GM12878 (cell line): ENCODE measurements at regions of chr12 and their contacts with region 1.

Region 1: DNA sequence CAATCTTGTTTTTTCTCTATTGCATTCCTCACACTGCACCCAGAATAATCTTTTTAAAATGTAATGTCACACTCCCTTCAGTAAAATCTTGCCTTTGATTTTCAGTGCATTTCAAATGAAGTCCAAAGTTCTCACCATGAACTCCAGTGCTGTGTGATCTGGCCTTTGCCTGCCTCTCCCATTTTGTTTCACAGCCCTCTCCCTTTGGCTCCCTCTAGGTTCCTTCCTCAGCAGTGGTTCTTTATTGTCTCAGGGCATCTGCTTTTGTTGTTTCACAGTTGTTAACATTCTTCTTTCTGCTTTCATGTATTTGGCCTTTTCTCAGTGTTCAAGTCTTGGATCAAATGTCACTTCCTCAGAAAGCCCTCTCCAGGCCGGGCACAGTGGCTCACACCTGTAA is 84.5 kb upstream of the AMN1 start:
- DNase-seq: no peak
- ATAC-seq: no peak
- H3K4me3 ChIP-seq: no peak overlapping the region
- H3K27ac ChIP-seq: no peak overlapping the region
- H3K4me1 ChIP-seq: peaks cover 22% of the 10 kb centered on the region
- H3K27me3 ChIP-seq: no peaks in the 10 kb centered on the region
- CTCF ChIP-seq: peak in 2 of 3 experiments; percentile 15 to 18; a peak in 1 of 6 replicates
- EP300 ChIP-seq: no peak
- POLR2A ChIP-seq: no peak
- RAD21 ChIP-seq: peak; percentile 37; the same call in 1 of the 2 replicates

Region 2: DNA sequence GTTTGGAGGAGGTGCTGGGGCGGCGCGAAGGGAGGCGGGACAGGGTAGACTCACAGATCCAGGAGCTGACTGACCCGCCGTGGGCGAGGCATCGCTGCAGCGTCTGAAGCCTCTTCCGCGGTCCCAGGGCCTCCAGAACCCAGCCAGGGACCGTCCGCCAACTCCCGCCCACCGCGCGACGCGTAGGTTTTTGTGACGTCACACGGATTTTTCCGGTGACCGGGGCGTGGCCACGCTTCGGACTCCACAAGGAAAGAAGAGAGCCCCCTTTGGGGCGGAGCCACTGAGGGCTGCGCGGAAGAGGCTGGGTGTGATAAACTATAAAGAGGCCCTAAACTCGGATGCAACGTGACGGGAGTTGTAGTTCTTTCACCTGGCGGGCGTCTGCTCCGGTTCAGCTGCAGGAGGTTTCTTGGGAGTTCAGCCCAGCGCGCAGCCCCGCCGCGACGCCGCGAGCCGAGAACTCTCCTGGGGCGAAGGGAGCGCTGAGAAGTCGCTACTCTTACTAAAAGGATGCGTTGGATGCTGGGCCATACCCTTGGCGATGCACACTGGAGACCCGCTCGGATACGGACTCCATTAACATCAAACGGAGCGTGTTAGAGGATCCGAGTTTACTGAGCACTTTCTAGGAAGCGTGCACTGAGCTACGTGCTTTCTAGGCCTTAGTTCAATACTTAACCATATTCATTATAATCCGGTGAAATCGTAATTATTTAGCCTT is 84.2 kb before region 1 on chr12 and contains the start of gene AMN1:
- CTCF ChIA-PET with region 1: interaction called, 5 read pairs
- POLR2A ChIA-PET with region 1: interaction called, 11 read pairs
- RAD21 ChIA-PET with region 1: interaction called, 18 read pairs
- SMC1A ChIA-PET with region 1: interaction called, 83 read pairs
- in situ Hi-C with region 1: no loop called
- intact Hi-C with region 1: loop called (anchors 5 kb)
- DNase-seq: peak; percentile 99
- ATAC-seq: peak; percentile 96
- H3K4me3 ChIP-seq: peak within 1 kb of the TSS; percentile 79
- H3K27ac ChIP-seq: peak within 1 kb of the TSS; percentile 97
- H3K4me1 ChIP-seq: peaks cover 17% of the 10 kb centered on the region
- H3K27me3 ChIP-seq: no peaks in the 10 kb centered on the region
- CTCF ChIP-seq: no peak
- EP300 ChIP-seq: peak in 1 of 2 experiments; percentile 46; a peak in 1 of 4 replicates
- POLR2A ChIP-seq: peak; percentile 92
- RAD21 ChIP-seq: no peak
- polyA plus RNA-seq, gene AMN1: 15.2 to 19.3 TPM

Region 3: GRCh38 chr12:31859232-31859977 is 46.1 kb after region 1 on chr12:
- CTCF ChIA-PET with region 1: no interaction called
- POLR2A ChIA-PET with region 1: no interaction called
- RAD21 ChIA-PET with region 1: interaction called, 3 read pairs
- SMC1A ChIA-PET with region 1: no interaction called
- in situ Hi-C with region 1: no loop called
- intact Hi-C with region 1: loop called (anchors 2 kb)
- DNase-seq: peak; percentile 63
- ATAC-seq: peak; percentile 90
- H3K4me3 ChIP-seq: no peak overlapping the region; the same call in 1 of the 2 replicates
- H3K27ac ChIP-seq: peak overlapping the region; percentile 74
- H3K4me1 ChIP-seq: peaks cover 6% of the 10 kb centered on the region; the same call in 1 of the 2 replicates
- H3K27me3 ChIP-seq: no peaks in the 10 kb centered on the region
- CTCF ChIP-seq: no peak
- EP300 ChIP-seq: no peak
- POLR2A ChIP-seq: no peak
- RAD21 ChIP-seq: no peak

Region 4: GRCh38 chr12:31890295-31891285 is 77.3 kb after region 1 on chr12:
- CTCF ChIA-PET with region 1: interaction called, 4 read pairs
- POLR2A ChIA-PET with region 1: interaction called, 5 read pairs
- RAD21 ChIA-PET with region 1: interaction called, 19 read pairs
- SMC1A ChIA-PET with region 1: interaction called, 25 read pairs
- in situ Hi-C with region 1: no loop called
- intact Hi-C with region 1: loop called (anchors 1 kb)
- DNase-seq: no peak
- ATAC-seq: peak; percentile 68
- H3K4me3 ChIP-seq: no peak overlapping the region
- H3K27ac ChIP-seq: peak overlapping the region; percentile 73
- H3K4me1 ChIP-seq: peaks cover 26% of the 10 kb centered on the region
- H3K27me3 ChIP-seq: no peaks in the 10 kb centered on the region
- CTCF ChIP-seq: no peak
- EP300 ChIP-seq: peak; percentile 25 to 45; a peak in 2 of 4 replicates
- POLR2A ChIP-seq: no peak
- RAD21 ChIP-seq: no peak

Region 5: GRCh38 chr12:31896514-31897039 is 83.3 kb after region 1 on chr12:
- CTCF ChIA-PET with region 1: interaction called, 4 read pairs
- POLR2A ChIA-PET with region 1: interaction called, 5 read pairs
- RAD21 ChIA-PET with region 1: interaction called, 19 read pairs
- SMC1A ChIA-PET with region 1: interaction called, 25 read pairs
- in situ Hi-C with region 1: no loop called
- intact Hi-C with region 1: loop called (anchors 2 kb)
- DNase-seq: peak; percentile 99
- ATAC-seq: peak; percentile 99
- H3K4me3 ChIP-seq: no peak overlapping the region
- H3K27ac ChIP-seq: peak overlapping the region; percentile 98
- H3K4me1 ChIP-seq: peaks cover 21% of the 10 kb centered on the region
- H3K27me3 ChIP-seq: no peaks in the 10 kb centered on the region
- CTCF ChIP-seq: no peak
- EP300 ChIP-seq: peak; percentile 95
- POLR2A ChIP-seq: peak; percentile 62
- RAD21 ChIP-seq: 0 out of 2 replicates have a peak, but pooled peaks have one; percentile 14

Region 6: DNA sequence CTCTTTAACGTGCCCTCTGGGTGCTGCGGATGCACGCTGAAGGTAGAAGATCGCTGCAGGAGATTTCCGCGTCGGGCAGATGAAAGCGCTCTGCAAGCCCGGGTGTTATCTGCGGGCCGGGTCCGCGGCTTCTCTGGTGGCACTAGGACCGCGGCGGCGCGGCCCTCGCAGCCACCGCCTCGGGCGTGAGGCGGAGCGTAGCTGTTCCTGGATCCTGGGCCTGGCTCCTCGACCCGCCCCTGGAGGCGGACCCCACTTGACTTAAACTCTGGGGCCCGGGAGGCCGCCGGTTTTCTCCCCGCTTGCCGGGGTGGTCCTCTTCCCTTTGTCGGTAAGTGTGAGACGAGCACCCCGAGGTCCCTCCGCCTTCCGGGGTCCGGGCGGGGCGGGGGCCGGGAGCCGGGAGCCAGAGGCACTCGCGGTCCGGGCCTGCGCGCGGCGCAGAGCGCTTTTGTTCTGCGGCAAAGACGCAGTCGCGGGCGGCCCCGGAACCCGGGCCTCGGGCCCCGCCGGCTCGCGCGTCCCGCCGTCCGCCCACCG is 145.9 kb after region 1 on chr12 and contains the start of gene RESF1:
- CTCF ChIA-PET with region 1: interaction called, 5 read pairs
- POLR2A ChIA-PET with region 1: interaction called, 5 read pairs
- RAD21 ChIA-PET with region 1: interaction called, 47 read pairs
- SMC1A ChIA-PET with region 1: interaction called, 4 read pairs
- in situ Hi-C with region 1: no loop called
- intact Hi-C with region 1: loop called (anchors 1 kb)
- DNase-seq: peak; percentile 57
- ATAC-seq: peak; percentile 92
- H3K4me3 ChIP-seq: peak within 1 kb of the TSS; percentile 86
- H3K27ac ChIP-seq: peak within 1 kb of the TSS; percentile 76
- H3K4me1 ChIP-seq: peaks cover 12% of the 10 kb centered on the region; the same call in 1 of the 2 replicates
- H3K27me3 ChIP-seq: no peaks in the 10 kb centered on the region
- CTCF ChIP-seq: no peak
- EP300 ChIP-seq: no peak
- POLR2A ChIP-seq: peak; percentile 81
- RAD21 ChIP-seq: no peak
- polyA plus RNA-seq, gene RESF1: 18.9 to 23.6 TPM

Region 7: GRCh38 chr12:32062881-32063280 is 249.6 kb after region 1 on chr12:
- CTCF ChIA-PET with region 1: no interaction called
- POLR2A ChIA-PET with region 1: no interaction called
- RAD21 ChIA-PET with region 1: no interaction called
- SMC1A ChIA-PET with region 1: no interaction called
- in situ Hi-C with region 1: no loop called
- intact Hi-C with region 1: loop called (anchors 5 kb)
- DNase-seq: no peak
- ATAC-seq: peak; percentile 45
- H3K4me3 ChIP-seq: no peak overlapping the region
- H3K27ac ChIP-seq: no peak overlapping the region
- H3K4me1 ChIP-seq: peaks cover 2% of the 10 kb centered on the region; the same call in 1 of the 2 replicates
- H3K27me3 ChIP-seq: no peaks in the 10 kb centered on the region
- CTCF ChIP-seq: 0 out of 6 replicates have a peak, but pooled peaks of 1 of the 3 experiments have one; percentile 3
- EP300 ChIP-seq: no peak
- POLR2A ChIP-seq: no peak
- RAD21 ChIP-seq: no peak